ENCODE measurements at regions of chr10 and their contacts with region 1.

Region 1: DNA sequence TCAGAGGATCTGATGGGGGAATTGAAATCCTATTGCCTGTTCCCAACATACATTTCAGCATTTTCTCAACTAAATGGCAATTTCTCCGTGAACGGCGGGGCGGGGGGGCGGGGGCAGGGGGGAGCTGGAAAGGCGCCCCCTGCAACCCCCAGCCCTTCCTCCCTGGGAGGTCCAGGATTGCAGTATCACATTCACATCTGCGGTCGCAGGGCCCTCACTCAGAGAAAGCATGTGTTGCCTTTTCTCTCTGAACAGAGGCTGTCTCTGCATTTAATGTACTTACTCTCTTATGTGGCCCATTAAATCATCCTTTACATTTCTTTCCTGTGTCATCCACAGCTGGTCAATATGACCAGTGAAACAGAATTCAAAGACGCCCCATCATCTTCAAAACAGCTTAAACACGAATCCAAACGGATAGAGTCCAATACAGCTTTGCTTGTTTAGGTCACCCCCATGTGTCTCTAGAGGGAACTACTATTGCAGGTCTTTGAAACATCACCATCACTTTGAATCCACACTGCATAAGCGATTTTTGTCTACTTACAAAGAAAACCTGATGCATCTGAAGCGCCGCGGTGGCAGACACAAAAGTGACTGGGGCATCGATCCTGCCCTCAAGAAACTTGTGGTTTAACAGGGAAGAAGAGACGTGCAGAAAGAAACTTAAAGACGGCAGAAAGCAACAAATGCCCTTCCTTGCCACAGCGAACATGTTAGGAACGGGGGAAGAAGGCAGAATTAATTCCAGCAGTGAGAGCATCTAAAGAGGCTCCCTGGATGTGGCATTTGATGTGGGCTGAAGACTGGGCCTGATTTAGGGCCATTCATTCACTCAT is 17.0 kb upstream of the ECHDC3 start:
- DNase-seq: no peak
- ATAC-seq: peak; percentile 89 to 91 (median 89)
- H3K4me3 ChIP-seq: no peak overlapping the region
- H3K27ac ChIP-seq: no peak overlapping the region
- H3K4me1 ChIP-seq: peaks cover 0 to 5% (median 2%) of the 10 kb centered on the region in 4 donors
- H3K27me3 ChIP-seq: no peaks in the 10 kb centered on the region
- CTCF ChIP-seq: peak; percentile 71 to 89 (median 79)
- POLR2A ChIP-seq: no peak

Region 2: GRCh38 chr10:11515596-11516430 is 209.3 kb before region 1 on chr10:
- intact Hi-C with region 1: loop called (anchors 5 to 10 kb)
- DNase-seq: no peak
- ATAC-seq: peak; percentile 88 to 94 (median 90)
- H3K4me3 ChIP-seq: no peak overlapping the region
- H3K27ac ChIP-seq: peak overlapping the region in 1 of 3 donors; percentile 26
- H3K4me1 ChIP-seq: peaks cover 0 to 38% (median 3%) of the 10 kb centered on the region in 4 donors
- H3K27me3 ChIP-seq: no peaks in the 10 kb centered on the region
- CTCF ChIP-seq: peak; percentile 84 to 94 (median 88)
- POLR2A ChIP-seq: no peak

Region 3: GRCh38 chr10:11838298-11838852 is 113.2 kb after region 1 on chr10:
- intact Hi-C with region 1: no loop called
- DNase-seq: no peak
- ATAC-seq: peak; percentile 34 to 55 (median 42)
- H3K4me3 ChIP-seq: no peak overlapping the region
- H3K27ac ChIP-seq: no peak overlapping the region
- H3K4me1 ChIP-seq: peaks cover 0 to 11% (median 4%) of the 10 kb centered on the region in 4 donors
- H3K27me3 ChIP-seq: no peaks in the 10 kb centered on the region
- CTCF ChIP-seq: no peak
- POLR2A ChIP-seq: no peak

Region 4: DNA sequence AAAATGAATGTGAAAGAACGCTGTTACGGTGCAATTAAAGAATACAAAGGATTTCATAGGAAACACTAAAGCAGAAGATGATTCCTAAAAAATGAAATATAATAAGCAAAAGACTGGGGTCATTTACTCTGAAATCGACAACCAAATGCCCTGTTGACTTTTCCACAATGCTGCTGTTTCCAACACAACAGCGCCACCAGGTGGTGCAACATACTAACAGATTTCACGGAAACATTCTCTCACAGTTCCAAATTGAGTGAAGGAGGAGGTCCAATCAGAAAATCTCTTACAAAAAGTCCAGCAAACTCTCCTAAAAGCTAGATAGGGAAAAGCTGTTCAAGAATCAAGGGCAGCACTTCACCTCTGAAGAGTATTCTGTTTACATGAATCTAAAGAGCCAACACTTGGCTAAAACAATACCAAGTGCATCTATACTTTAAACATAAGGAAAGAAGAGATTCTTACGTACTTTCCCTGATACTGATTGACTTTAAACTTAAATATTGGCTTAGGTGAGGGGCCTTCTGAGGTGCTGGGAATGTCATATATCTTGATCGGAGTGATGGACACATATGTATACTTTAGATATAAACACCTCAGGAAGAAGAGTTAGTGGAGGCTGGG is 261.5 kb after region 1 on chr10:
- intact Hi-C with region 1: no loop called
- DNase-seq: peak; percentile 82 to 88 (median 82)
- ATAC-seq: peak; percentile 91 to 95 (median 94)
- H3K4me3 ChIP-seq: peak overlapping the region in 1 of 3 donors; percentile 6
- H3K27ac ChIP-seq: peak overlapping the region; percentile 70 to 86 (median 86)
- H3K4me1 ChIP-seq: peaks cover 0 to 3% (median 0%) of the 10 kb centered on the region in 4 donors
- H3K27me3 ChIP-seq: no peaks in the 10 kb centered on the region
- CTCF ChIP-seq: peak; percentile 88 to 98 (median 90)
- POLR2A ChIP-seq: no peak

Measured in right lobe of liver (tissue), 6 donors.